K562 (cell line): ENCODE measurements at regions of chr2 and their contacts with region 1.

Region 1: DNA sequence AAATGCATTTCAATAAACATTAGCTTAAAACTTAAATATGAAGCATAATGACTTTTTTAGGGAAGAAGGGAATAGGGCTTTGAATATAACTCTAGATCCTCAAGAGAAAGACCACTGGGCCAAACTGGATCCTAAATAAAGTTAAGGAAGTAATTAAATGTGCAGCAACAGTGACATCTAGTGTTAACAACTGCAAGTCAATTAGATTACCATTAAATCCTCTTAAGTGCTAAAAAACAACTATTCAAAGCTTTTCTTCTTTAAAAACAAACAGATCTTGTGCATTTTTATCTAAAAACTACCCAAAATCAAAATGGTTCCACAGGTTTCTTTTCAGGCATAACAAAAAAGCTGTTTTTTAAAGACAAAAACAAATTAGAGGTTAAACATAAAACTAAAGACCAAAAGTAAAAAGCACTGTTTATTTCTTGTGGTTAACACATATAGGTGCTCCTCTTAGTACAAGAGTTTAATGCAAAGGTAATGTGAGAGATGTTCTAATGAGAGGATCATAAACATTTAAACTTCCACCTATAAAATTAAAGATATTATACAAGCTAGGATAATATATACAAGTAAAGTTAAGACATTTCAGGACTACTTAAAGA is 111.4 kb downstream of the THADA start:
- DNase-seq: peak; percentile 15 to 81 (median 27)
- ATAC-seq: peak; percentile 83
- H3K4me3 ChIP-seq: no peak overlapping the region
- H3K27ac ChIP-seq: no peak overlapping the region
- H3K4me1 ChIP-seq: no peaks in the 10 kb centered on the region
- H3K27me3 ChIP-seq: no peaks in the 10 kb centered on the region
- CTCF ChIP-seq: peak in 2 of 3 experiments; percentile 44 to 79; a peak in 4 of 6 replicates
- EP300 ChIP-seq: no peak
- POLR2A ChIP-seq: no peak
- RAD21 ChIP-seq: peak; percentile 92 to 93

Region 2: DNA sequence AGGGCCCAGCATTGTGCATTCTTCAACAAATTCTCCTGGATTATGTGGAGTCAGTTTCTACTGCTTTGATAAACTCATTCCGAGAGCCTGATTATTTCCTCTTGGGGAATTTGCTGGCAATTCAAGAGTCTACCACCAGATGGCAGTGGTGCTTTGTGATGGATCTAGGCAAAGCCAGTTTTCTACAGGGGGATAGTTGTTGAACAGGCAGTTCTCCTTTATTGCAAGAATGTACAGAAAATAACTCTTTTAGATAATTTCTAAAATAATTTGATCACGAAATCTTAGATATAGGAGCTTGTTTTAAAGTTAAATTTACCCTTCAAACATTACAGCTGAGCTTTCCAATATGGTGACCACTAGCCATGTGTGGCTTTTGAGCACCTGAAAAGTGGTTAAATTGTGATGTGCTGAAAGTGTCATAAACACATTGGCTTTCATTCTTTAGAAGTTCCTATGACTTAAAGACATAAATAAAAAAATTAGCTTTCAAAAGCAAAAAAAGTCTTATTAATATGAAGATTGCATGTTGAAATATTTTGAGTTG is 625.3 kb before region 1 on chr2:
- CTCF ChIA-PET with region 1: interaction called, 8 read pairs
- POLR2A ChIA-PET with region 1: no interaction called
- in situ Hi-C with region 1: loop called (anchors 10 kb)
- intact Hi-C with region 1: loop called (anchors 10 kb)
- DNase-seq: peak; percentile 78 to 85 (median 81)
- ATAC-seq: peak; percentile 72
- H3K4me3 ChIP-seq: no peak overlapping the region
- H3K27ac ChIP-seq: no peak overlapping the region
- H3K4me1 ChIP-seq: peaks cover 0 to 15% of the 10 kb centered on the region in 2 experiments; a peak in 3 of 5 replicates
- H3K27me3 ChIP-seq: no peaks in the 10 kb centered on the region
- CTCF ChIP-seq: peak; percentile 85 to 97 (median 86)
- EP300 ChIP-seq: no peak
- POLR2A ChIP-seq: no peak
- RAD21 ChIP-seq: peak; percentile 98 to 99

Region 3: DNA sequence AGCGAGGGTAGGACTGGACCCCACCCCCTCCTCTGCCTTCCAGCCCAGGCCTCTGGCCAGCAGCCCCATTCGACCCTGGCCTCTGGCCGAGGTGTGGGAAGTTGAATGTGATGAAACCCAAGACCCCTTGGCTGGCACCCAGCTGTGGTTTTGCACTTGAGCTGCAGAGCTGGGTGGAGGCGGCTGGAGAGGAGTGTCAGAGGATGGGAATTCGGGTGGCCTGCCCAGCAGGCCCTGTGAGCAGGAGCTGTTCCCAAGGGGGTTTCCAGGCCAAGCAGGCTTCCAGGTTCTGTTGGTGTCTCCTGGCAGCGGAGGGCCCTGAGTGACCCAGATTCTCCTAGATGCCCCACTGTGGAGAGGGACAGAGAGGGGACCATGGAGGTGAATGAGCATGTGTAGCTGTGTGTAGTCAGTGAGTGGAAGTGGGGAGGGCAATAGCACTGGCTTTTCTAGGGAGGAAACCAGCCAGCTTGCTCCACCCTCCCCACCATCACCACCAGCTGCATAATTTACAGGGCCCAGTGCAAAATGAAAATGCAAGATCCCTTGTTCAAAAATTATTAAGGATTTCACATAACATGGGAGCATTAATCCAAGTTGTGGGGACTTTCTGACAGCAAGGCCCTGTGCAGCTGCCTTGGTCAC is 519.9 kb before region 1 on chr2:
- CTCF ChIA-PET with region 1: no interaction called
- POLR2A ChIA-PET with region 1: no interaction called
- in situ Hi-C with region 1: loop called (anchors 5 kb)
- intact Hi-C with region 1: no loop called
- DNase-seq: no peak
- ATAC-seq: no peak
- H3K4me3 ChIP-seq: no peak overlapping the region
- H3K27ac ChIP-seq: no peak overlapping the region
- H3K4me1 ChIP-seq: peaks cover 22 to 30% of the 10 kb centered on the region in 2 experiments
- H3K27me3 ChIP-seq: no peaks in the 10 kb centered on the region
- CTCF ChIP-seq: no peak
- EP300 ChIP-seq: no peak
- POLR2A ChIP-seq: no peak
- RAD21 ChIP-seq: no peak

Region 4: DNA sequence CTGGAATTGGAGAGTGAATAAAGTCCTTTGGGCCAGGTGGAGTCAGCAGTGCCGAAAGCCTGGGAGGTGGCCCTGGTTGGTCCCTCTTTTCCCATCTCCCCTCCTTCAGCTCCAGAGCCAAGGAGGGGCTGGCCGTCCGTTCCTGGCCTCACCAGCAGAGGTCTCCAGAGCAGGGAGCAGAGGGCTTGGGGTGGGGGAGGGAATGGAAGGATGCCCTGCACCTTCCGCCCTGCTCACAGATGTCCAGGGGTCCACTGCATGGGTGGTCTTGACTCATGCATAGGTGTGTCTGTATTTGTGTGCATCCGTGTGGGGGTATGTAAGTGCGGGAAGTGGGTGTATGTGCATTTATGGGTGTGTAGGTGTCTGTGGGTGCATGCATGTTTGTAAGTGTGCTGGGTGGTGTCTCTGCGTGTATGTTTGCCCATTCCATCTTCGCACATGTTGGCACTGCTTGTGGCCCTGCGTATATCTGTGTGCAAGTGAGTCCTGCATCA is 459.9 kb before region 1 on chr2:
- CTCF ChIA-PET with region 1: interaction called, 4 read pairs
- POLR2A ChIA-PET with region 1: no interaction called
- in situ Hi-C with region 1: no loop called
- intact Hi-C with region 1: loop called (anchors 1 kb)
- DNase-seq: peak; percentile 79 to 87 (median 84)
- ATAC-seq: peak; percentile 96
- H3K4me3 ChIP-seq: no peak overlapping the region
- H3K27ac ChIP-seq: no peak overlapping the region
- H3K4me1 ChIP-seq: peaks cover 0 to 13% of the 10 kb centered on the region in 2 experiments; a peak in 3 of 5 replicates
- H3K27me3 ChIP-seq: no peaks in the 10 kb centered on the region
- CTCF ChIP-seq: peak; percentile 90 to 92 (median 90)
- EP300 ChIP-seq: no peak
- POLR2A ChIP-seq: no peak
- RAD21 ChIP-seq: peak; percentile 92 to 98

Region 5: GRCh38 chr2:43276962-43277391 is 207.4 kb before region 1 on chr2:
- CTCF ChIA-PET with region 1: interaction called, 13 read pairs
- POLR2A ChIA-PET with region 1: no interaction called
- in situ Hi-C with region 1: no loop called
- intact Hi-C with region 1: loop called (anchors 5 kb)
- DNase-seq: no peak
- ATAC-seq: no peak
- H3K4me3 ChIP-seq: no peak overlapping the region
- H3K27ac ChIP-seq: no peak overlapping the region
- H3K4me1 ChIP-seq: no peaks in the 10 kb centered on the region
- H3K27me3 ChIP-seq: no peaks in the 10 kb centered on the region
- CTCF ChIP-seq: no peak
- EP300 ChIP-seq: no peak
- POLR2A ChIP-seq: no peak
- RAD21 ChIP-seq: no peak